Naive thymus-derived CD4-positive, alpha-beta T cell (primary cell): ENCODE measurements at regions of chr5 and their contacts with region 1.

Region 1: GRCh38 chr5:43191740-43192557 is at the start of gene NIM1K:
- DNase-seq: peak in 8 of 9 donors; percentile 7 to 55 (median 16)
- ATAC-seq: peak; percentile 51
- H3K4me3 ChIP-seq: peak within 1 kb of the TSS; percentile 63
- H3K4me3 Mint-ChIP-seq: peak within 1 kb of the TSS; percentile 81 to 94 (median 88)
- H3K27ac ChIP-seq: no peak within 1 kb of the TSS
- H3K27ac Mint-ChIP-seq: peak within 1 kb of the TSS in 6 of 9 donors; percentile 21 to 86 (median 71)
- H3K4me1 ChIP-seq: peaks cover 4 to 18% of the 10 kb centered on the region in 2 donors
- H3K4me1 Mint-ChIP-seq: peaks cover 11 to 33% (median 23%) of the 10 kb centered on the region in 7 donors
- H3K27me3 ChIP-seq: peaks cover 0 to 5% of the 10 kb centered on the region in 2 donors
- H3K27me3 Mint-ChIP-seq: peaks cover 15 to 22% (median 19%) of the 10 kb centered on the region in 5 donors
- total RNA-seq, gene NIM1K: 0.40 to 0.97 (median 0.61) TPM

Region 2: GRCh38 chr5:43233946-43234345 is 42.0 kb after region 1 on chr5:
- CTCF ChIA-PET with region 1: no interaction called
- POLR2A ChIA-PET with region 1: no interaction called
- intact Hi-C with region 1: loop called in 1 of 2 experiments (anchors 2 kb)
- DNase-seq: no peak
- ATAC-seq: no peak
- H3K4me3 ChIP-seq: no peak overlapping the region
- H3K4me3 Mint-ChIP-seq: peak overlapping the region in 1 of 10 donors; percentile 18
- H3K27ac ChIP-seq: no peak overlapping the region
- H3K27ac Mint-ChIP-seq: peak overlapping the region in 1 of 9 donors; percentile 58
- H3K4me1 ChIP-seq: no peaks in the 10 kb centered on the region
- H3K4me1 Mint-ChIP-seq: peaks cover 0 to 12% (median 0%) of the 10 kb centered on the region in 7 donors
- H3K27me3 ChIP-seq: no peaks in the 10 kb centered on the region
- H3K27me3 Mint-ChIP-seq: peaks cover 0 to 5% (median 0%) of the 10 kb centered on the region in 5 donors

Region 3: GRCh38 chr5:43305948-43306565 is 114.1 kb after region 1 on chr5:
- CTCF ChIA-PET with region 1: no interaction called
- POLR2A ChIA-PET with region 1: no interaction called
- intact Hi-C with region 1: loop called (anchors 1 to 10 kb)
- DNase-seq: peak in 7 of 9 donors; percentile 24 to 64 (median 50)
- ATAC-seq: peak; percentile 79
- H3K4me3 ChIP-seq: no peak overlapping the region
- H3K4me3 Mint-ChIP-seq: peak overlapping the region in 1 of 10 donors; percentile 18
- H3K27ac ChIP-seq: no peak overlapping the region
- H3K27ac Mint-ChIP-seq: peak overlapping the region in 6 of 9 donors; percentile 4 to 86 (median 30)
- H3K4me1 ChIP-seq: peaks cover 0 to 10% of the 10 kb centered on the region in 2 donors
- H3K4me1 Mint-ChIP-seq: peaks cover 21 to 82% (median 52%) of the 10 kb centered on the region in 7 donors
- H3K27me3 ChIP-seq: no peaks in the 10 kb centered on the region
- H3K27me3 Mint-ChIP-seq: no peaks in the 10 kb centered on the region

Region 4: GRCh38 chr5:43389679-43390329 is 197.9 kb after region 1 on chr5:
- CTCF ChIA-PET with region 1: no interaction called
- POLR2A ChIA-PET with region 1: no interaction called
- intact Hi-C with region 1: loop called in 1 of 2 experiments (anchors 2 kb)
- DNase-seq: peak in 8 of 9 donors; percentile 28 to 60 (median 50)
- ATAC-seq: peak; percentile 92
- H3K4me3 ChIP-seq: no peak overlapping the region
- H3K4me3 Mint-ChIP-seq: no peak overlapping the region
- H3K27ac ChIP-seq: no peak overlapping the region
- H3K27ac Mint-ChIP-seq: peak overlapping the region in 2 of 9 donors; percentile 62 to 67
- H3K4me1 ChIP-seq: peaks cover 0 to 7% of the 10 kb centered on the region in 2 donors
- H3K4me1 Mint-ChIP-seq: peaks cover 4 to 48% (median 34%) of the 10 kb centered on the region in 7 donors
- H3K27me3 ChIP-seq: no peaks in the 10 kb centered on the region
- H3K27me3 Mint-ChIP-seq: no peaks in the 10 kb centered on the region

Region 5: GRCh38 chr5:43514816-43515677 is 323.1 kb after region 1 on chr5 and contains the start of gene C5orf34:
- CTCF ChIA-PET with region 1: no interaction called
- POLR2A ChIA-PET with region 1: no interaction called
- intact Hi-C with region 1: loop called in 1 of 2 experiments (anchors 1 kb)
- DNase-seq: peak; percentile 84 to 94 (median 89)
- ATAC-seq: peak; percentile 97
- H3K4me3 ChIP-seq: peak within 1 kb of the TSS; percentile 84
- H3K4me3 Mint-ChIP-seq: peak within 1 kb of the TSS; percentile 90 to 97 (median 94)
- H3K27ac ChIP-seq: peak within 1 kb of the TSS; percentile 81
- H3K27ac Mint-ChIP-seq: peak within 1 kb of the TSS; percentile 90 to 98 (median 95)
- H3K4me1 ChIP-seq: peaks cover 8 to 14% of the 10 kb centered on the region in 2 donors
- H3K4me1 Mint-ChIP-seq: peaks cover 17 to 42% (median 36%) of the 10 kb centered on the region in 7 donors
- H3K27me3 ChIP-seq: no peaks in the 10 kb centered on the region
- H3K27me3 Mint-ChIP-seq: no peaks in the 10 kb centered on the region
- total RNA-seq, gene C5orf34: 1.1 to 5.2 (median 3.3) TPM